SK-N-SH (cell line): ENCODE measurements at regions of chr16 and their contacts with region 1.

Region 1: GRCh38 chr16:2486645-2487516 is 12.0 kb downstream of the TBC1D24 start:
- DNase-seq: no peak
- H3K4me3 ChIP-seq: no peak overlapping the region
- H3K27ac ChIP-seq: no peak overlapping the region
- H3K4me1 ChIP-seq: peaks cover 3 to 41% of the 10 kb centered on the region in 2 experiments; a peak in 3 of 4 replicates
- H3K27me3 ChIP-seq: no peaks in the 10 kb centered on the region
- CTCF ChIP-seq: no peak
- EP300 ChIP-seq: no peak
- RAD21 ChIP-seq: no peak

Region 2: DNA sequence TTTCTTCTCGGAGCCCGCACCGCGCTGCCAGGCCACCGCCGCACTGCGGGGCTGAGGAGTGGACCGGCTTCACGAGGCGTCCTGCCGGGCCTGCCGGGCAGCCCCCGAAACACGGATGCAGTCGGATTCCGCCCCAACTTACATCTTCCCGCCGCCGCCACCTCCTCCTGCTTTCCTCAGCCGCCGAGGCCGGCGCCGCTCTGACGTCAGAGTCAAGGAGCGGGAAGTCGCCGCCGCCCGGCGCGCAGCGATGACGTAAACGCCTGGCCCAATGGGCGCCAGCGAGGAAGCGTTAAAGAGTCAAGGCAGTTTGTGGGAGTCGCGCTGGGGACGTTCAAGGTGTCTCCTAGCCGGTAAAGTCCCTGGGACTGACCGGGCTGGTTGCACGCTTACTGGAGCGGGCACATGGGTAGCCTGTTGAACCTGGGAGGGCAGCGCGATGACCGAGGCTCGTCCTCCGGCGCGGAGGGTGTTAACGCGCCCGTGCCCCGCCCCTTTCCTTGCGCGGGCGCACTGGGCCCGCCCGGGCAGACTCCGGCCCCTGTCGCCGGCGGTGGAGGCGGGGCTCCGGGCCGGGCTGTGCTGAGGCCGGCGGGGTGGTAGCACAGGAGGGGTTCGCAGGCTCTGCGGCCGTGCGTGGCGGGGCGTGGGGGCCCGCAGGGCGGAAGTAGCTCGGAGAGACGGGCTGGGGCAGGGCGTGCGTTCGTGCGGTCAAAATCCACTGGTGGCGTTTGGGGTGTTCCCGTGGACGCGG is 218.8 kb before region 1 on chr16 and contains the start of gene RNPS1:
- CTCF ChIA-PET with region 1: no interaction called
- POLR2A ChIA-PET with region 1: no interaction called
- DNase-seq: peak; percentile 100
- H3K4me3 ChIP-seq: peak within 1 kb of the TSS; percentile 92 to 94
- H3K27ac ChIP-seq: peak within 1 kb of the TSS; percentile 98
- H3K4me1 ChIP-seq: peaks cover 12 to 25% of the 10 kb centered on the region in 2 experiments; a peak in 2 of 4 replicates
- H3K27me3 ChIP-seq: no peaks in the 10 kb centered on the region
- CTCF ChIP-seq: no peak
- EP300 ChIP-seq: peak in 1 of 2 experiments; percentile 36; a peak in 1 of 4 replicates
- RAD21 ChIP-seq: no peak
- polyA plus RNA-seq, gene RNPS1: 227 and 277 TPM in 2 replicates

Region 3: DNA sequence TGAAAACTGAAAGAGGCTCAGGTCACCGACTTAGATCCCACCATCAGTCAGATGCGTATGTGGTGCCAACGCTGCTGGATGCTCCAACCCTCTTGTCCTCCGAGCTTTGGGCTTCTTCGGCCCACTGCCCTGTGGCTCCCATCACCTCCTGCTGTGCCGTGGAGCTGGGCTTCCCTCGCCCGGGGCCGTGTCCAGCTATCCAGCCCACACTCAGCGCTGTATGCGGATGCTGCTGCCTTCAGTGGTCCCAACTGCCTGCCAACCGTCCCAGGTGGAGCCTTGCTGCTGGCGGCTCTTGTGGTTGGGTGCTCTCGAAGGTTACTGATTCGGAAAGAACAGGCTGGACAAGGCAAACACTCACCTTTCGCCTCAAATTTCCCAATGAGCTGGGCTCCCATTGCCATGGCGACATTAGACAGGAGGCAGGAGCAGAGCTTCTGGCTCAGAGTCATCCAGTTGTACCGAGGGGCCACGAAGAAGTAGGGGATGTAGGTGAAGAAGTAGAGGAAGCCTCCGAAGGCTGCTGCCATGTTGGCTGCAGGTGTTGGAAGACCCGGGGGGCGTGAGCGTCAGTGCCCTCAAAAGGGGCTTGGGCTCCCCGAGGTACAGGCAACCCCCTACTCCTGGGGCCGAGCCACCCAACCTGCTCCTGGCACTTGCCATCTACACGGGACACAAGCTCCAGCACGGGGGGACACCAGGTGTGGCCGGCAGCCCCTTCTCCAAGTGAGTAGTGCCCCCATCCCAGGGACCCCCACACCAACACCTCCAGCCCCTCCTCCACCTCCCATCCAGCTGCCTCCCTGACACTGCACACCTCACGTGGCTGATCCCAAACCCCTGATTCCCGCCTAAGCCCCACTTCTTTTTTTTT is 178.6 kb before region 1 on chr16:
- CTCF ChIA-PET with region 1: no interaction called
- POLR2A ChIA-PET with region 1: no interaction called
- DNase-seq: no peak
- H3K4me3 ChIP-seq: no peak overlapping the region
- H3K27ac ChIP-seq: no peak overlapping the region
- H3K4me1 ChIP-seq: no peaks in the 10 kb centered on the region
- H3K27me3 ChIP-seq: no peaks in the 10 kb centered on the region
- CTCF ChIP-seq: no peak
- EP300 ChIP-seq: no peak
- RAD21 ChIP-seq: no peak

Region 4: DNA sequence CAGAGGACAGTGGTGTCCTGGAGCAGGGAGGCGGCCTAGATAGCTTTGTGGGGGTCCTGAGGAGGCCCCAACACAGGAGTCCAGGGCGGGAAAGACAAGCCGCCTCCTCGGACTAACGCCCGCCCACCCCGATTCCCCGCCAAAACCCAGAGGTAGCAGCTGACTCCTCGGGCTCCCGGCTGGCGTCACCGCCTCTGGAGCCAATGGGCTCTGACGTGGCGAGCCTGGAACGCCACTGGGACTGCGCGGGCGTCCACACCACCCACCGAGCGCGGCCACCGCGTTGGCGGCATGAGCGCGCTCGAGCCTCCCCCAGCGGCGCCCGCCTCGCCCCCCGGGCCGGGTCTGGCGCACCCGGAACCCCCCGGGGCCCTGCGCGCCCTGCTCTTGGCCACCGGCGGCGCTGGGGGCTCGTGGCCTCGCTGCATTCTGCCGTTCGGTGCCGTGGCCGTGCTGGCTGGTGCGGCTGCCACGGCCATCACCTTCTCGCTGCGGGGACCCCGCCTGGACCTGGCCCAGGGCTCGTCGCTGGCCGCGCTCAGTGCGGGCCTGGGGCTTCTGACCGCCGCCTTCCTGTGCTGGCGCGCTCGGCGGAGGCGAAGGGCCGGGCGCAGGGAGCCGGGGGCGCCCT is 19.2 kb before region 1 on chr16:
- CTCF ChIA-PET with region 1: interaction called, 19 read pairs
- POLR2A ChIA-PET with region 1: interaction called, 44 read pairs
- DNase-seq: peak; percentile 89
- H3K4me3 ChIP-seq: peak overlapping the region; percentile 51 to 57
- H3K27ac ChIP-seq: peak overlapping the region in 1 of 2 experiments; percentile 97; a peak in 2 of 4 replicates
- H3K4me1 ChIP-seq: peaks cover 6 to 55% of the 10 kb centered on the region in 2 experiments; a peak in 3 of 4 replicates
- H3K27me3 ChIP-seq: no peaks in the 10 kb centered on the region
- CTCF ChIP-seq: no peak; the same call in 1 of the 2 replicates
- EP300 ChIP-seq: no peak
- RAD21 ChIP-seq: 0 out of 2 replicates have a peak, but pooled peaks have one; percentile 8

Region 5: GRCh38 chr16:2474877-2475412 is 11.9 kb before region 1 on chr16 and contains the start of gene TBC1D24:
- CTCF ChIA-PET with region 1: interaction called, 19 read pairs
- POLR2A ChIA-PET with region 1: interaction called, 44 read pairs
- DNase-seq: peak; percentile 100
- H3K4me3 ChIP-seq: peak within 1 kb of the TSS; percentile 79 to 89
- H3K27ac ChIP-seq: peak within 1 kb of the TSS; percentile 38 to 89; a peak in 3 of 4 replicates
- H3K4me1 ChIP-seq: peaks cover 0 to 55% of the 10 kb centered on the region in 2 experiments; a peak in 3 of 4 replicates
- H3K27me3 ChIP-seq: no peaks in the 10 kb centered on the region
- CTCF ChIP-seq: no peak
- EP300 ChIP-seq: no peak
- RAD21 ChIP-seq: no peak
- polyA plus RNA-seq, gene TBC1D24: 5.6 and 6.7 TPM in 2 replicates